Activated naive CD8-positive, alpha-beta T cell treated with anti-CD3 and anti-CD28 coated beads, Interleukin-2, amount 10 ng/mL, durations not matched to agents 7 days and 5 days (primary cell): ENCODE measurements at regions of chr3 and their contacts with region 1.

Region 1: DNA sequence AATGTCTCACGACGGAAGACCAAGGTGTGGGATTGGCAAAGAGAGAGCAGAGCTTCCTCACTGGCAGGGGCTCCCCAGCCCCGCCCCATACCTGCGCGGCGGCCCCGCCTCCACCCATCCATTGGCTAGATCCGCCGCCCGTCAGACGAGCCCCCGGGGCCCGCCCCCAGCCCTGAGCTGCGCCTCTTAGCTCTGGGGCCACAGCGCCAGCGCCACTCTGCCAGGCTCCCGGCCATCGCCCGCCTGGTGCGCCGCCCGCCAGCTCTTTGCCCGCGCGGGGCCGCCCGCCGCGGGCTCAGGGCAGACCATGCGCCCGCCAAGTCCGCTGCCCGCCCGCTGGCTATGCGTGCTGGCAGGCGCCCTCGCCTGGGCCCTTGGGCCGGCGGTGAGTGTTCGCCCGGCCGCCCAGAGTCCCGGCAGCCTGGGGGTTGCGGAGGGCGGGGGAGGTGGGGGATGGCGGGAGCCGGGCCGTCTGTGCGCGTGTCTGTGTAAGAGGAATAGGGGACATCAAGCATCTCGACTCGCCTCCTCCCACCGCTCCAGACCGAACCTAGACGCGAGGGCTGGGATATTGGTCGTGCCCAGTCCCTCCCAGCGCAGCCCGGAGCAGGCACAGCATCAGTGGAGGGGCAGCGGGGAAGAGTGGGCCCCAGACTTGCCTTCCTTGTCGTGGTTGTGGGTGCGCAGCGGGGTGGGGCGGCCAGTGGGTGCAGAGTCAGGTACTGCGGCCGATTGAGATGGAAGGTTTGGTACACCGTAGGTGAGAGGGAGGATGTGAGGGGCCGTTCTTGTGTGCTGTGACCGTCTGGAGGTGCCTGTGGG is at the start of gene VIPR1:
- DNase-seq: peak; percentile 94
- ATAC-seq: peak; percentile 94
- H3K4me3 Mint-ChIP-seq: peak within 1 kb of the TSS; percentile 97
- H3K27ac Mint-ChIP-seq: peak within 1 kb of the TSS; percentile 72
- H3K4me1 Mint-ChIP-seq: peaks cover 26% of the 10 kb centered on the region
- H3K27me3 Mint-ChIP-seq: peaks cover 30% of the 10 kb centered on the region
- total RNA-seq, gene VIPR1: 22.3 to 26.9 TPM

Region 2: GRCh38 chr3:42394579-42395288 is 107.9 kb before region 1 on chr3:
- POLR2A ChIA-PET with region 1: no interaction called
- DNase-seq: no peak
- ATAC-seq: no peak
- H3K4me3 Mint-ChIP-seq: no peak overlapping the region
- H3K27ac Mint-ChIP-seq: no peak overlapping the region
- H3K4me1 Mint-ChIP-seq: no peaks in the 10 kb centered on the region
- H3K27me3 Mint-ChIP-seq: no peaks in the 10 kb centered on the region

Region 3: DNA sequence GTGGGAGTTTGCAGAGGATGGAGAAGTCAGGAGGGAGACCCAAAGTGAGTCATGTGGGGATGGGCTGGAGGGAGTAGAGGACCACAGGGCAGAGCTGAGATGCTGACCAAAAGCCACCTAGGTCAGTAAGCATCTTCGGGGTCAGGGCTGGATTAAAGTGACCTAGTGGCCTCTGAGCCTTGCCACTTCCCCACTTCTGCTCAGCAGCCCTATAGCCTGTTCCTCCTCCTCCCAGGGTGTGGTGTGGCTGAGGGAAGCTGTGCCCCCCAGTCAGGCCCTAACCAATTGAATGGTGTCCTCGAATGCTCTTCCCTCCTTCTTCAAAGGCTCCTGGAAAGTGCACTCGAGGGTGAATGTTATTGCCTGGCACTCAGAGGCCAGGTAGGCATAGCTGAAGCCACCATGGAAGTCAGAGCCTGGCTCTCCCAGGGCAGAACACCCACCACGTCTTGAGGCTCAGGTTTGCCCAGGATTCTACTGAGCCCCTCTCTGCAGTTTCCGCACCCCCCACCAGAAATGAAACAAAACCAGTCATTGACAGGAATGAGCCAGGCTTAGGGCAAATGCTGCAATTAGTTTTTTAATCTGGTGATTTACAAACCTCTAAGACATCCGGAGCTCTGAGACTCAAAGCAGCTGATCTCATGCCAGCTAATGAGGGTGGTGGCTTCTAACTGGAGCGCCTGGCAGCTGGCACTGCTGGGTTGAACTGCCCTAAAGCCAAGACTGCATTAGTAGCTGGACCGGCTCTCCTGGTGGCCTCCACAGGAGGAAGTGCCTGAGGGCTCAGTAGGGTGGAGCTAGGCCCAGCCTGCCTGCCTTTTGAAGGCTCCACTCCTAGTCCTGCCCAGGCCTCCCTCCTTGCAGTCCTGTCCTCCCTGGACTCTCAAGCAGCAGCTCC is 26.2 kb before region 1 on chr3:
- POLR2A ChIA-PET with region 1: no interaction called
- DNase-seq: no peak
- ATAC-seq: no peak
- H3K4me3 Mint-ChIP-seq: no peak overlapping the region
- H3K27ac Mint-ChIP-seq: no peak overlapping the region
- H3K4me1 Mint-ChIP-seq: no peaks in the 10 kb centered on the region
- H3K27me3 Mint-ChIP-seq: peaks cover 3% of the 10 kb centered on the region

Region 4: DNA sequence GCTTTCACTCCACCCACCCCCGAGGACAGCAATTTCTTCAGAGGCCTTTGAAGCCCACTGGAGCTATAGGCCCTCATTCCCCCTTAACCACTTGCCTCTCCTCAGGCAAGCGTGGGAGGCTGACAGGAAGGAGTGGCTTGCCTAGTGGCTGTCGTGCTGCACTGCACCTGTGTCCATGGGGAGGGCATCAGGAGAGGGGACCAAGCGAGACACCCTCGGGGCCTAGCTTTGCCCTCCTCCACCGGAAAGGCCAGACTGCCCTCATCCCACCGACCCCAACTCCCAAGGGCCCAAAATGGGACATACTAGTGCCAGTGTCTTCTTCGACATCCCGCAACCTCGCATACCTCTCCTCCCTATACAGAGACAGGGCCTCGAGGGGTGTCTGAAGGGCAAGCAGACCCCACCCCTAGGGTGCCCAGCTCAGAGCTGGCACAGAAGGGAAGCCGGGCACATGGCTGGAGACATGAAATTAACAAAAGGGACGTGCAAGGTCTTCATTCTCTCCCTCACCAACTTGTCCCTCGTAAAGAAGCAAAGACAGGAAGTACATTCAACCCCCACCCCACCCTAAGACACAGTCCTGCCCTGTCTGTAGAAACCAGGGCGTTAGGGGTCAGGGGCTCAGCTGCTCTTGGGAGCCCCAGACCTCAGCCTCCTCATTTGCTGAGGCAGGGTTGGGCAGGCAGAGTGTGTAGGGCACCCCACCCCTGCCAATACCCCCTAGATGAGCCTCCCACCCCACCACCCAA is 24.2 kb after region 1 on chr3:
- POLR2A ChIA-PET with region 1: interaction called, 14 read pairs
- DNase-seq: peak; percentile 61
- ATAC-seq: peak; percentile 86
- H3K4me3 Mint-ChIP-seq: peak overlapping the region; percentile 34
- H3K27ac Mint-ChIP-seq: peak overlapping the region; percentile 88
- H3K4me1 Mint-ChIP-seq: peaks cover 32% of the 10 kb centered on the region
- H3K27me3 Mint-ChIP-seq: no peaks in the 10 kb centered on the region

Region 5: GRCh38 chr3:42535981-42536790 is 33.5 kb after region 1 on chr3:
- POLR2A ChIA-PET with region 1: interaction called, 11 read pairs
- DNase-seq: no peak
- ATAC-seq: peak; percentile 53
- H3K4me3 Mint-ChIP-seq: no peak overlapping the region
- H3K27ac Mint-ChIP-seq: no peak overlapping the region
- H3K4me1 Mint-ChIP-seq: peaks cover 8% of the 10 kb centered on the region
- H3K27me3 Mint-ChIP-seq: peaks cover 5% of the 10 kb centered on the region